ENCODE measurements at regions of chrX and their contacts with region 1.

Region 1: GRCh38 chrX:99305573-99305972 is 1104.5 kb downstream of the PCDH19 start:
- DNase-seq: no peak
- ATAC-seq: no peak
- H3K4me3 ChIP-seq: no peak overlapping the region
- H3K27ac ChIP-seq: no peak overlapping the region
- H3K4me1 ChIP-seq: no peaks in the 10 kb centered on the region
- H3K27me3 ChIP-seq: peaks cover 0 to 12% (median 0%) of the 10 kb centered on the region in 7 donors
- CTCF ChIP-seq: no peak

Region 2: GRCh38 chrX:97372001-97372766 is 1933.4 kb before region 1 on chrX:
- intact Hi-C with region 1: loop called in 1 of 10 experiments (anchors 5 kb)
- DNase-seq: no peak
- ATAC-seq: no peak
- H3K4me3 ChIP-seq: no peak overlapping the region
- H3K27ac ChIP-seq: no peak overlapping the region
- H3K4me1 ChIP-seq: no peaks in the 10 kb centered on the region
- H3K27me3 ChIP-seq: peaks cover 0 to 5% (median 0%) of the 10 kb centered on the region in 7 donors
- CTCF ChIP-seq: no peak

Region 3: GRCh38 chrX:98607773-98608172 is 697.8 kb before region 1 on chrX:
- intact Hi-C with region 1: no loop called
- DNase-seq: no peak
- ATAC-seq: no peak
- H3K4me3 ChIP-seq: no peak overlapping the region
- H3K27ac ChIP-seq: no peak overlapping the region
- H3K4me1 ChIP-seq: no peaks in the 10 kb centered on the region
- H3K27me3 ChIP-seq: peaks cover 0 to 6% (median 0%) of the 10 kb centered on the region in 7 donors
- CTCF ChIP-seq: no peak

Region 4: GRCh38 chrX:99421796-99422195 is 116.2 kb after region 1 on chrX:
- intact Hi-C with region 1: no loop called
- DNase-seq: no peak
- ATAC-seq: no peak
- H3K4me3 ChIP-seq: no peak overlapping the region
- H3K27ac ChIP-seq: no peak overlapping the region
- H3K4me1 ChIP-seq: no peaks in the 10 kb centered on the region
- H3K27me3 ChIP-seq: no peaks in the 10 kb centered on the region
- CTCF ChIP-seq: no peak

Measured in heart right ventricle (tissue), 16 donors.